ENCODE measurements at regions of chr11 and their contacts with region 1.

Region 1: DNA sequence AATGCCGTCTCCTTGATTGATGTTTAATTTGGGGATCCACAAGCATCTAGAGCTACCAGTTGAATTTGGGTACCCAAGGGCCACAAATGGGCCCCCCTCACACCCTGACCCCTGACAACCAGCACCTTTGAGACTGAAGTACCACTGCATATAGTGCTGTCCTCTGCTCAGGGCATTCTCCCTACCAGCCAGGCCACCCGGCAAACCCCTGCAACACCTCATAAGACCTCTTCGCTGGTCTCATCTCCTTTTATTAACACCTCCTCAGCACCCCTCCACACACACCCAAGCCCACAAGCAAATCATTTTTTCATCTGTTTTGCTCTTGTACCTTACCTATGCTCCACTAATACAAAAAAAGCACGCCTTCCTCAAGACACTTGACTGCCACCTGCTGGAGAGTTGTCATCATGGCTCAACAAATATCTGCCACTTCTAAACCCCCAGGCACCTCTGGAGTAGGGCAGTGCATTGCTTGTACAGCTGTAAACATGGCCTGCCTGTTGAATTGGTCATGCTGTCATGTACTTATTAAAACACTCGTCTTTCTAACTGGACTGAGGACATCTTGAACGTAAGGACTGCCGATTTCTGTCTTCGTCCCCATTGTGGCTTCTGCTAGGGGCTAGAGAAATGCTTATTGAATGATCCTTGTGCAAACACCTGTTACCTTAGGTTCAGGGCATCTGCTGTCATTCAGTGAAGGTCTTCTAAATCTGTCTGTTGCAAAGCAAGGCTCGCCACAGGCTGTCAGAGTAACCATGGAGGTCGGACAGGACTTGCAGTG is 66.5 kb downstream of the BMAL1 start:
- DNase-seq: peak; percentile 63 to 68 (median 67)
- H3K4me3 ChIP-seq: no peak overlapping the region
- H3K4me3 Mint-ChIP-seq: no peak overlapping the region
- H3K27ac ChIP-seq: no peak overlapping the region
- H3K27ac Mint-ChIP-seq: peak overlapping the region in 6 of 7 donors; percentile 1 to 85 (median 31)
- H3K4me1 ChIP-seq: peaks cover 30% of the 10 kb centered on the region
- H3K4me1 Mint-ChIP-seq: peaks cover 46 to 85% (median 70%) of the 10 kb centered on the region in 4 donors
- H3K27me3 ChIP-seq: no peaks in the 10 kb centered on the region
- H3K27me3 Mint-ChIP-seq: no peaks in the 10 kb centered on the region

Region 2: DNA sequence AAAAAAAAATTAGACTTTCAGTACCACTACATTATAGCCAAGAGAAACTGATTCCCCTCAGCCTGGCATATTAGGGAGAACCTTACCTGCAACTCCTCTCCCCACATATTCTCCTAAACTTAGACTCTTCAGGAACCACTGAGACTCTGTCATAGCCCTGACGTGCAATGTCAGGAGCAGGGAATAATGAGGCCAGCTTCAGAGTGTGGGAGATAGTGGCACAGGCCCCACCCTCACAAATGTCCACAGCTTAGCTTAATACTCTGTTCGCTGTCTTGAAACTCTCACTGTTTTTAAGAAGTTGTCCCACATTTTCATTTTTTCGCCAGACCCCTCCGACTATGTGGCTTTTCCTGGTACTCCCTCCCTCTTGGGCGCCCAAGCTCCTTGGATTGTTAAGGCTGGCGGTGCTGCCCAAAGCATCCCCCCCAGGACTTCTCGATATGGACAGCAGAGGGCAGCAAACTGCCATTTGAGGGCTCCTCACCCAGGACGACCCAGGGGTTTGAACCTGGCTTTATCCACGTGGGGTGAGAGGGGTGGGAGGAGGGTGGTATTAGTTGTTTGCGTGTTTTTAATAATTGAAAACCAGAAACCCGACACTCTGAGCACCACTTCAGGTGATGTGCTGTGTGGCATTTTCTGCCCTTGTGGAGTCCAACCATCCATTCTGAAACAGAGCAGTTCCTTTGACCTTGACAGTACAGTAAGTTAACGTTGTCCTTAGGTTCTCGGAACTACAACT is 380.2 kb before region 1 on chr11:
- CTCF ChIA-PET with region 1: interaction called, 6 read pairs
- POLR2A ChIA-PET with region 1: no interaction called
- intact Hi-C with region 1: loop called (anchors 1 kb)
- DNase-seq: peak; percentile 41 to 60 (median 52)
- H3K4me3 ChIP-seq: no peak overlapping the region
- H3K4me3 Mint-ChIP-seq: no peak overlapping the region
- H3K27ac ChIP-seq: no peak overlapping the region
- H3K27ac Mint-ChIP-seq: peak overlapping the region in 1 of 7 donors; percentile 31
- H3K4me1 ChIP-seq: no peaks in the 10 kb centered on the region
- H3K4me1 Mint-ChIP-seq: no peaks in the 10 kb centered on the region
- H3K27me3 ChIP-seq: no peaks in the 10 kb centered on the region
- H3K27me3 Mint-ChIP-seq: peaks cover 18 to 21% of the 10 kb centered on the region in 2 donors

Region 3: DNA sequence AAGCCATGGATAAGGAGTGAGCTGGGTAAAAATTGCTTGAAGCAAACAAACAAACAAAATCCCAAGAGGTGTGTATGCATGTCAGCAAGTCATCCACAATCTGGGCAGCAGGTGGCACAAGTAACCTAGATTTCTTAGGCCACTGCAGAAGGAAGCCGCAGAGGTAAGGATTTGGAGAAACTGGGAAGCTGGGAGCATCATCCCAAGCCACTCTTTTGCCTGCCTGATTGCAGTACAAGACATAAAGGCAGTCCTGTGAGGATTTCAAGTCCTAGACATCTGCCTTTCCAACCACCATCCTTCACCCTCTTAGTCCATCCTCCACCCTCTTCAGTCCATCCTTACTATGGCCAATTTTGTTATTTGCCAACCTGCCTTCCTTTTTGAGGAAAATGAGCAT is 133.7 kb before region 1 on chr11:
- CTCF ChIA-PET with region 1: interaction called, 41 read pairs
- POLR2A ChIA-PET with region 1: interaction called, 5 read pairs
- intact Hi-C with region 1: loop called (anchors 1 kb)
- DNase-seq: peak in 4 of 5 donors; percentile 13 to 20 (median 14)
- H3K4me3 ChIP-seq: no peak overlapping the region
- H3K4me3 Mint-ChIP-seq: no peak overlapping the region
- H3K27ac ChIP-seq: no peak overlapping the region
- H3K27ac Mint-ChIP-seq: peak overlapping the region in 2 of 7 donors; percentile 37 to 42
- H3K4me1 ChIP-seq: peaks cover 24% of the 10 kb centered on the region
- H3K4me1 Mint-ChIP-seq: peaks cover 17 to 34% (median 25%) of the 10 kb centered on the region in 4 donors
- H3K27me3 ChIP-seq: no peaks in the 10 kb centered on the region
- H3K27me3 Mint-ChIP-seq: no peaks in the 10 kb centered on the region

Region 4: GRCh38 chr11:13249996-13250395 is 94.1 kb before region 1 on chr11:
- CTCF ChIA-PET with region 1: interaction called, 34 read pairs
- POLR2A ChIA-PET with region 1: no interaction called
- intact Hi-C with region 1: loop called (anchors 1 kb)
- DNase-seq: peak in 2 of 5 donors; percentile 4 to 9
- H3K4me3 ChIP-seq: no peak overlapping the region
- H3K4me3 Mint-ChIP-seq: no peak overlapping the region
- H3K27ac ChIP-seq: no peak overlapping the region
- H3K27ac Mint-ChIP-seq: no peak overlapping the region
- H3K4me1 ChIP-seq: no peaks in the 10 kb centered on the region
- H3K4me1 Mint-ChIP-seq: no peaks in the 10 kb centered on the region
- H3K27me3 ChIP-seq: peaks cover 6% of the 10 kb centered on the region
- H3K27me3 Mint-ChIP-seq: peaks cover 8 to 13% of the 10 kb centered on the region in 2 donors

Region 5: DNA sequence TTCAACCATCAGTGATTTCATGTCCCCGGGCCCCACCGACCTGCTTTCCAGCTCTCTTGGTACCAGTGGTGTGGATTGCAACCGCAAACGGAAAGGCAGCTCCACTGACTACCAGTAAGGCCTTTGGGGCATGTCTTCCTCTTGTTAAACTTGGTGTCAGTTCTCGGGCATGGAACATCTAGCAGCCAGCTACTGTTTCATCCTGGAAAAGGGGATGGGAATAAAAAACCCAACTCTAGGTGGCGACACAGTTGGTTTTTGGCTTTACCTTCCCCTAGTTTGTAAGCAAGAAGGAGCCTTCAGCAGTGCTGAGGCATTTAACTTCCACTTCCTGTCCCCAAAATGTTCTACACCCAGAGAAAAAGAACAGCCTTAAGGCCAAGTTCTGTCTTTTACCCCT is 10.2 kb after region 1 on chr11:
- CTCF ChIA-PET with region 1: interaction called, 11 read pairs
- POLR2A ChIA-PET with region 1: interaction called, 3 read pairs
- intact Hi-C with region 1: no loop called
- DNase-seq: no peak
- H3K4me3 ChIP-seq: no peak overlapping the region
- H3K4me3 Mint-ChIP-seq: no peak overlapping the region
- H3K27ac ChIP-seq: no peak overlapping the region
- H3K27ac Mint-ChIP-seq: peak overlapping the region in 4 of 7 donors; percentile 42 to 76 (median 66)
- H3K4me1 ChIP-seq: no peaks in the 10 kb centered on the region
- H3K4me1 Mint-ChIP-seq: peaks cover 8 to 15% (median 12%) of the 10 kb centered on the region in 4 donors
- H3K27me3 ChIP-seq: no peaks in the 10 kb centered on the region
- H3K27me3 Mint-ChIP-seq: no peaks in the 10 kb centered on the region

Measured in CD4-positive, alpha-beta memory T cell (primary cell).